ENCODE measurements at regions of chr2 and their contacts with region 1.

Region 1: DNA sequence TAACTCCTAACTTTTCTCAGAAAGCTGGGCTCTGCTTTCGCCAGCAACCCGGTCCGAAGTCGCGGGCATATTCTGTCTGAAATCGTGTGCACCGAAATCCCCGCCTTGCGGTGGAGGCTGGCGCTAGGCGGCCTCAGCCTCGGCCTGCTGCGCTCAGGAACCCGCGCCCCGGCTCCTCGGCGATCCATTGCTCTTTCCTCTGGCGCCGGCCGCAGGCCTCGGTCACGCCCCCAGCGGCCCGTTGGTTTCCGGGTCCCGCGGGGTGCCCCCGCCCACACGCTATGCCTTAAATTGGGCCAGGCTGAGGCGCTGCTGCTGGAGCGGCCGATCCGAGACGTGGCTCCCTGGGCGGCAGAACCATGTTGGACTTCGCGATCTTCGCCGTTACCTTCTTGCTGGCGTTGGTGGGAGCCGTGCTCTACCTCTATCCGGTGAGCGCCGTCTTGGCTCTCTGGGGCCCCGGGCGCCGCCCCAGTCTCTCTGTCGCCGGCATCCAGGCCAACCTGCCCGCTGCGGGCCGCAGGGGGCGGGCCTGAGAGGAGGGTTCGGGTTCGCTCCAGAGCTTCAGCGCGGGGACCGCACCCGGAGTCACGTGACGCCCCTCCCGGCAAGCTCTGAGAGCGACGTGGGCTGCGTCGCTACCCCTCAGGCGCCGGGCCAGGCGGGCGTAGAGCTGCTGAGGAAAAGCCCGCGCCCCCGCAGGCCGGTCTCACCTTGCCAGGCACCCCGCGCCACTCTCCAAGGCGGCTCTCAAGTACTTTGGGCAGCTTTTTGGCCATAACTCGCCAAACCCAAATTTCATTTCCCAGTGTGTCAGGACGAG is at the start of gene CYP20A1:
- DNase-seq: peak; percentile 94 to 99 (median 98)
- ATAC-seq: peak; percentile 91
- H3K4me3 ChIP-seq: peak within 1 kb of the TSS; percentile 97
- H3K4me3 Mint-ChIP-seq: peak within 1 kb of the TSS; percentile 90 to 100 (median 95)
- H3K27ac ChIP-seq: peak within 1 kb of the TSS; percentile 98
- H3K27ac Mint-ChIP-seq: peak within 1 kb of the TSS; percentile 96 to 100 (median 98)
- H3K4me1 ChIP-seq: peaks cover 6 to 14% of the 10 kb centered on the region in 2 donors
- H3K4me1 Mint-ChIP-seq: peaks cover 25 to 45% (median 33%) of the 10 kb centered on the region in 7 donors
- H3K27me3 ChIP-seq: no peaks in the 10 kb centered on the region
- H3K27me3 Mint-ChIP-seq: no peaks in the 10 kb centered on the region
- total RNA-seq, gene CYP20A1: 23.7 to 43.3 (median 28.3) TPM

Region 2: GRCh38 chr2:202033321-202034248 is 1205.3 kb before region 1 on chr2 and contains the start of gene FZD7:
- CTCF ChIA-PET with region 1: no interaction called
- POLR2A ChIA-PET with region 1: no interaction called
- intact Hi-C with region 1: loop called in 1 of 2 experiments (anchors 5 kb)
- DNase-seq: peak; percentile 70 to 87 (median 81)
- ATAC-seq: peak; percentile 92
- H3K4me3 ChIP-seq: peak within 1 kb of the TSS; percentile 91
- H3K4me3 Mint-ChIP-seq: peak within 1 kb of the TSS in 9 of 10 donors; percentile 87 to 96 (median 92)
- H3K27ac ChIP-seq: peak within 1 kb of the TSS; percentile 44
- H3K27ac Mint-ChIP-seq: peak within 1 kb of the TSS in 8 of 9 donors; percentile 46 to 83 (median 72)
- H3K4me1 ChIP-seq: peaks cover 9 to 11% of the 10 kb centered on the region in 2 donors
- H3K4me1 Mint-ChIP-seq: peaks cover 6 to 17% (median 14%) of the 10 kb centered on the region in 7 donors
- H3K27me3 ChIP-seq: peaks cover 6 to 22% of the 10 kb centered on the region in 2 donors
- H3K27me3 Mint-ChIP-seq: peaks cover 0 to 45% (median 7%) of the 10 kb centered on the region in 5 donors
- total RNA-seq, gene FZD7: 0.27 to 0.99 (median 0.43) TPM

Region 3: DNA sequence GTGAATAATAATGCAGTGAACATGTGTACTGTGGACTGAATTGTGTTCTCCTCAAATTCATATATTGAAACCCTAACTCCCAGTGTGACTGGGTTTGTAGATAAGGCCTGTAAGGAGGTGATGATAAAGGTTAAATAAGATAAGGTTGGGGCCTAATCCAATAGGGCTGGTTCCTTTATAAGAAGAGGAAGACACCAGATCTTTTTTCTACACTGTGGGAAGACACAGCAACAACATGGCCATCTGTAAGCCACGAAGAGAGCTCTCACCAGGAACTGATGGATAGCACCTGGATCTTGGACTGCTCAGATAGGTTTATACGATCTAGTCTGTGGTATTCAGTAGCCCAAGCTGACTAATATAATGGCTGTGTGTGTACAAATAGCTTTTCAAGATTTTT is 796.0 kb before region 1 on chr2:
- CTCF ChIA-PET with region 1: no interaction called
- POLR2A ChIA-PET with region 1: no interaction called
- intact Hi-C with region 1: no loop called
- DNase-seq: no peak
- ATAC-seq: no peak
- H3K4me3 ChIP-seq: no peak overlapping the region
- H3K4me3 Mint-ChIP-seq: no peak overlapping the region
- H3K27ac ChIP-seq: no peak overlapping the region
- H3K27ac Mint-ChIP-seq: no peak overlapping the region
- H3K4me1 ChIP-seq: no peaks in the 10 kb centered on the region
- H3K4me1 Mint-ChIP-seq: peaks cover 0 to 11% (median 6%) of the 10 kb centered on the region in 7 donors
- H3K27me3 ChIP-seq: no peaks in the 10 kb centered on the region
- H3K27me3 Mint-ChIP-seq: no peaks in the 10 kb centered on the region

Region 4: GRCh38 chr2:202577250-202578183 is 661.4 kb before region 1 on chr2:
- CTCF ChIA-PET with region 1: no interaction called
- POLR2A ChIA-PET with region 1: no interaction called
- intact Hi-C with region 1: loop called in 1 of 2 experiments (anchors 1 kb)
- DNase-seq: no peak
- ATAC-seq: no peak
- H3K4me3 ChIP-seq: no peak overlapping the region
- H3K4me3 Mint-ChIP-seq: no peak overlapping the region
- H3K27ac ChIP-seq: no peak overlapping the region
- H3K27ac Mint-ChIP-seq: peak overlapping the region in 2 of 9 donors; percentile 38 to 53
- H3K4me1 ChIP-seq: no peaks in the 10 kb centered on the region
- H3K4me1 Mint-ChIP-seq: peaks cover 0 to 2% (median 0%) of the 10 kb centered on the region in 7 donors
- H3K27me3 ChIP-seq: no peaks in the 10 kb centered on the region
- H3K27me3 Mint-ChIP-seq: no peaks in the 10 kb centered on the region

Region 5: DNA sequence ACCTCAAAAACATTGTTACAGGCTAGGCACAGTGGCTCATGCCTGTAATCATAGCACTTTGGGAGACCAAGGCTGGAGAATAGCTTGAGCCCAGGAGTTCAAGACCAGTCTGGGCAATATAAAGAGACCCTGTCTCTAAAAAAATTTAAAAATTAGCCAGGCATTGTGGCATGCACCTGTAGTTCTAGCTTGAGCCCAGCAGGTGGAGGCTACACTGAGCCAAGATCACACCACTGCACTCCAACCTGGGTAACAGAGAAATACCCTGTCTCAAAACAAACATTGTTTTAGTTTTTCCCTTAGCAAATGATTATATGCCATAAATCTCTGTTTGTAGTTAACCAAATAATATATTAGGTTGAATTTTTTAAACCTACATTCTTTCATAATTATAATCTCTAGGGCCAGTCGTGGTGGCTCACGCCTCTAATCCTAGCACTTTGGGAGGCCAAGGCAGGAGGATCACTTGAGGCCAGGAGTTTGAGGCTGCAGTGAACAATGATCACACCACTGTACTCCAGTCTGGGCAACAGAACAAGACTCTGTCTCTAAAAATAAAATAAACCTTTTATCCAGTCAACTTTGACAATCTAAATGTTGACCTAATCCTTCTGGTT is 13.4 kb before region 1 on chr2:
- CTCF ChIA-PET with region 1: interaction called, 7 read pairs
- POLR2A ChIA-PET with region 1: interaction called, 10 read pairs
- intact Hi-C with region 1: loop called (anchors 1 kb)
- DNase-seq: peak in 6 of 9 donors; percentile 2 to 41 (median 36)
- ATAC-seq: peak; percentile 85
- H3K4me3 ChIP-seq: no peak overlapping the region
- H3K4me3 Mint-ChIP-seq: no peak overlapping the region
- H3K27ac ChIP-seq: no peak overlapping the region
- H3K27ac Mint-ChIP-seq: no peak overlapping the region
- H3K4me1 ChIP-seq: no peaks in the 10 kb centered on the region
- H3K4me1 Mint-ChIP-seq: no peaks in the 10 kb centered on the region
- H3K27me3 ChIP-seq: no peaks in the 10 kb centered on the region
- H3K27me3 Mint-ChIP-seq: no peaks in the 10 kb centered on the region

Region 6: DNA sequence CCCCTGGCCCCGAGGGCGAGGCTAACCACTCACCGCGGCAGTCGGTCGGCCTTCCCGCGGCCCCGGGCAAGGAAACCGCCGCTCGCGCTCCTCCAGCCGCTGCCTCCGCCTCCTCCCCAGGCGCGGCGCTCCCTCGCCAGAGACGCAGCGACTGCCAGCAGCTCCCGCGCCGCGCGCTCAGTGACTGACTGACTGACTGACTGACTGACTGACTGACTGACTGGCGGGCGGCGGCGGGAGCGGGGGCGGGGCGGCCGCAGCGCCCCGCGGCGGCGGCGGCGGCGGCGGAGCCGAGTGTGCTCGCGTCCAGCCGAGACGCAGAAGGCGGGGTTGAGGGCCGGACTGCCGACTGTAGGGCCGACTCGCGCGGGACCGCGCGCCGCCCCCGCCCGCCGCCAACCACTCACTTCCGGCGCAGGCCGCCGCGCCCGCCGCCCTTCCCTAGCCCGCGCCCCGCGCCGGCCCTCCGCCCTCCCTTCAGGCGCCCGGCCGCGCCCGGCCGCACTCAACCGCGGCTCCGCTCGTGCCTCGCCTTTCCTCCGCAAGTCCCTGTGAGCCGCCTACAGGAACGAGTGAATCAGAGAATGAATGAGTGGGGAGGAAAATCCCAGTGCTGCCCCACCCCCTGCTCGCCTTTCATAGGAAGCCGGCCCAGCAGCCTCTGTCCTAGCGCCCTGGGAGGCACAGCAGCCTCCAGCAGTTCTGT is 296.3 kb after region 1 on chr2 and contains the start of gene RAPH1:
- CTCF ChIA-PET with region 1: no interaction called
- POLR2A ChIA-PET with region 1: no interaction called
- intact Hi-C with region 1: loop called in 1 of 2 experiments (anchors 2 kb)
- DNase-seq: peak; percentile 24 to 72 (median 51)
- ATAC-seq: peak; percentile 77
- H3K4me3 ChIP-seq: peak within 1 kb of the TSS; percentile 71
- H3K4me3 Mint-ChIP-seq: peak within 1 kb of the TSS; percentile 79 to 95 (median 90)
- H3K27ac ChIP-seq: peak within 1 kb of the TSS; percentile 49
- H3K27ac Mint-ChIP-seq: peak within 1 kb of the TSS; percentile 32 to 90 (median 73)
- H3K4me1 ChIP-seq: peaks cover 10 to 15% of the 10 kb centered on the region in 2 donors
- H3K4me1 Mint-ChIP-seq: peaks cover 16 to 30% (median 28%) of the 10 kb centered on the region in 7 donors
- H3K27me3 ChIP-seq: no peaks in the 10 kb centered on the region
- H3K27me3 Mint-ChIP-seq: peaks cover 6 to 75% (median 16%) of the 10 kb centered on the region in 5 donors
- total RNA-seq, gene RAPH1: 1.8 to 5.5 (median 3.0) TPM

Region 7: GRCh38 chr2:203934041-203934492 is 695.2 kb after region 1 on chr2:
- CTCF ChIA-PET with region 1: no interaction called
- POLR2A ChIA-PET with region 1: interaction called, 4 read pairs
- intact Hi-C with region 1: loop called in 1 of 2 experiments (anchors 10 kb)
- DNase-seq: peak in 8 of 9 donors; percentile 37 to 80 (median 60)
- ATAC-seq: peak; percentile 31
- H3K4me3 ChIP-seq: peak overlapping the region; percentile 22
- H3K4me3 Mint-ChIP-seq: peak overlapping the region; percentile 69 to 92 (median 78)
- H3K27ac ChIP-seq: peak overlapping the region; percentile 71
- H3K27ac Mint-ChIP-seq: peak overlapping the region; percentile 87 to 97 (median 93)
- H3K4me1 ChIP-seq: peaks cover 40 to 42% of the 10 kb centered on the region in 2 donors
- H3K4me1 Mint-ChIP-seq: peaks cover 33 to 68% (median 55%) of the 10 kb centered on the region in 7 donors
- H3K27me3 ChIP-seq: no peaks in the 10 kb centered on the region
- H3K27me3 Mint-ChIP-seq: no peaks in the 10 kb centered on the region